ENCODE measurements at regions of chr16 and their contacts with region 1.

Region 1: DNA sequence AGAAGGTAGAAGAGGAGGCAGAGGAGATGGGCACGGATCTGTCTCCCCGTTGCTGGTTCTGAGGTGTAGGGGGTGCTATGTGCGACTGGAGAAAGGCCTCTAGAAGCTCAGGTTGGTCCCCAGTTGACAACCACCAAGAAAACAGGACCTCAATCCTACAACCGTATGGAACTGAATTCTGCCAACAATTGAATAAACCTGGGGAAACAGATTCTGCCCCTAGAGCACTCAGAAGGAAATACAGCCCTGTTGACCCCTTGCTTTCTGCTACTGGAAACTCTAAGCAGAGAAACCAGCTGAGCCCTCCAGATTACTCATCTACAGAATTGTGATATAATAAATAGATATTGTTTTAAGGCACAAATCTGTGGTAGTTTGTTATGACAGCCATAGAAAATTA is 313.0 kb upstream of the GOT2 start:
- DNase-seq: no peak
- ATAC-seq: no peak

Region 2: DNA sequence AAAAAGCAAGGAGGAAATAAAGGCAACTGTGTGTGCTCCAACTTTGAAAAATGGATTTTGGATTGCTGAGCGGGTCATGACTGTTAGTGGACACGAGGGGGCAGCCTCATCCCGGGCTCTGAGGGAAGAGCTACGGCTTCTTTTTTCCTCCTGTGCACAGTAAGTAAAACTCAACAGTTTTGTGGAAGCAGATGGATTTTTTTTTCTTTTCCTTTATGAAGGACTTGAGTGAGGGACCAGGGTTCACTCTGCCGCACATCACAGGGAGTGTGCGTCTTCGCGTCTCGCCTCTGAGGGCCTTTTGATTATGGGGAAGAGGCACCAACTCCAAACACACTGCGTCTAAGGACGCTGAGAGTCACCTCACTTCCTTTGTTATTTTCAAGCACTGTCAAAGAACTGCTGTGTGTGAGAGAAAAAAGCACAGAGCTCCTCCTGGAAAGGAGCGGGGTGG is 232.7 kb before region 1 on chr16:
- intact Hi-C with region 1: no loop called
- DNase-seq: peak; percentile 57
- ATAC-seq: peak; percentile 87

Region 3: DNA sequence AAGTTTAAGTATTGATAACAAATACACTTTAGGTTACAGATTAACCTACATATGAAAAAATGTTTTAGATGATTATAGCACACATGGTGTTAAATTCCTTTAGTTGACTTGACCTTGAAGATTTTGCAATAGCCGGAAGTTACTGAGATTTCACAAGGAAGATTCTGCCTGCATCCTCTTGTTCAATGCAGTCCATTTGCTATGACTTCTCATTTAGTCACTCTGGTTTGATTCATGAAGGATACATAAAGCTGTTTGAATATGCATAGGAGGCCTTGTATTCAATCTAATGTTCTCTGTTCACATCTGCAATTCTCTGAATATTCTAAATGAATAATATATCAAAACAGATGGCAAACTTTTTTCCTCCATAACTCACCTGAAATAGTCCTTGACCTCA is 557.2 kb after region 1 on chr16:
- intact Hi-C with region 1: loop called (anchors 5 kb)
- DNase-seq: no peak
- ATAC-seq: no peak